Naive thymus-derived CD4-positive, alpha-beta T cell (primary cell): ENCODE measurements at regions of chr4 and their contacts with region 1.

Region 1: DNA sequence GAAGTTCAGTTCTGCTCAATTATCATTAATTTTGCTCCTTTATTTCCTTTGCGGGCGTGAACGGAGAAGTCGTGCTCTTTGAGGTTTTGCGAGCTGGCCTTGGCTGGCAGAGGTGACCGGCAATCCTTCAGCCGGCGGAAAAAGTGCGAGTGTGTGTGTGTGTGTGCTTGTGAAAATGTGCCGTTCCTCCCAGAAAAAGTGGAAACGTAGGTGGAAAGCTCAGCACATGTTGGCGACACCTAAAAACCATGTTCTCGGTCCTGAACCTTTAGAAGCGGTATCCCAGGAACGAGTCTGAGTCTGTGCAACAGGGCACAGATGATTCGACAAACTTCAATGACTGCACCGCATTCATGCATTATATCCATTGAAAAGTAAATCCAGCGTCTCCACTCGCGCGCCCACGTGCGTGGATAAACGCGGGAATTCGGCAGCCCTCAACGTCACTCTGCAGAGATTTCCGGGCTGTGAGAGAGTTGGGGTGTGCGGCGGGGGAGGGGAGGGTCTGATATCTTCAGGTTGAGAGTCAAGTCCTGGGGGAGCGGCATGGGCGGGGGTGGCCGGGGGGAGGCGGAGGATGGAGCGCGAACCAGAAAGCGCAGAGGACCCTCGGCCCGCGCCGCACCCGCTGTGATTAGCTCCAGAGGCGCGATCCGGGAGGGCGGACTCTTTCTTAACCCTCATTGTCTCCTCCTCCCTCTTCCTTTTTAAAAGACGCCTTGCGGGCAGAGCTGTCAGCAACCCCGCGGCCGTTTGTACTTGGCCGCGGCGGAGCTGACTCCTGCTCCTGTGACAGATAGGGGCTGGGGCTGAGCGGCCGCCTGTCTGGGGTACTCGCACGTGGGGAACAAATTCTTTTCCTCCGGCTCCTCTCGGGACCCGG is at the start of gene SHISA3:
- DNase-seq: no peak
- ATAC-seq: peak; percentile 60
- H3K4me3 ChIP-seq: peak within 1 kb of the TSS; percentile 43
- H3K4me3 Mint-ChIP-seq: peak within 1 kb of the TSS; percentile 74 to 89 (median 86)
- H3K27ac ChIP-seq: no peak within 1 kb of the TSS
- H3K27ac Mint-ChIP-seq: no peak within 1 kb of the TSS
- H3K4me1 ChIP-seq: no peaks in the 10 kb centered on the region
- H3K4me1 Mint-ChIP-seq: peaks cover 9 to 36% (median 29%) of the 10 kb centered on the region in 7 donors
- H3K27me3 ChIP-seq: peaks cover 3 to 4% of the 10 kb centered on the region in 2 donors
- H3K27me3 Mint-ChIP-seq: peaks cover 49 to 70% (median 58%) of the 10 kb centered on the region in 5 donors
- total RNA-seq, gene SHISA3: 0.36 TPM in 1 of 5 experiments, not detected in the others

Region 2: DNA sequence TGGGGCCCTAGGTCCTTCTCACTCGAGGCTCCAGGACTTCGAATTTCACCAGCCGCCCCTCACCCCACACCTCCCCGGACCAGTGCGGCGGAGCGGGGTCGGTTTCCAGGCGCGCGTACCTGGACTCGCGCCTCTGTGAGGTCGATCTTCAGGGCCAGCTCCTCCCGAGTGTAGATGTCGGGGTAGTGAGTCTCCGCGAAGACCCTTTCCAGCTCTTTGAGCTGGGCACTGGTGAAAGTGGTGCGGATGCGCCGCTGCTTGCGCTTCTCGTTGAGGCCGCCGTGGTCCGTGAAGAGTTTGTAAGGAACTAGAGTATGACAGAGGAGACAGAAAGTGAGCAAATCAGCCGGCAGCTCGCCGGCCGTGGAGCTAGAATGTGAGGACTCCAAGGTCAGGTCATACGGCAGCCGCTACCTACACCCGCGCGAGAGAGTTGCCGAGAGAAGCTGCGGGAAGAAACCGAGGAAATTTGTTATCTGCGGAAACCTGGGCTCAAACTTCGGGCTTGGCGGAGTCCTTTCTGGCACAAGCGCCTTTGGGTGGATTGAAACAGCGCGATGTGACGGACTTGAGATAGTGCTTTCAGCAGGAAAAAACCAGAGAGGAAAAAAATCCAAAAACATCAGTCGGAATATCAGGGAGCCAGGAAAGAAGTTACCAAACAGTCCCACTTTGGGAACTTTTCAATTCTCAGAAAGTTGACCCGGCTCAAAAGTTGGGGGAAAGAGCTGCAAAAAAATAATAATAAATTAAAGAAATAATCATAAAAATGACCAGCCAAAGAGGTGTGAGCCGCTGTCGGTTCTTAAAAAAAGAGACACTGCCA is 649.5 kb before region 1 on chr4:
- CTCF ChIA-PET with region 1: no interaction called
- POLR2A ChIA-PET with region 1: no interaction called
- intact Hi-C with region 1: loop called in 1 of 2 experiments (anchors 5 kb)
- DNase-seq: no peak
- ATAC-seq: no peak
- H3K4me3 ChIP-seq: no peak overlapping the region
- H3K4me3 Mint-ChIP-seq: no peak overlapping the region
- H3K27ac ChIP-seq: no peak overlapping the region
- H3K27ac Mint-ChIP-seq: no peak overlapping the region
- H3K4me1 ChIP-seq: no peaks in the 10 kb centered on the region
- H3K4me1 Mint-ChIP-seq: peaks cover 0 to 11% (median 6%) of the 10 kb centered on the region in 7 donors
- H3K27me3 ChIP-seq: peaks cover 0 to 12% of the 10 kb centered on the region in 2 donors
- H3K27me3 Mint-ChIP-seq: peaks cover 72 to 84% (median 83%) of the 10 kb centered on the region in 5 donors